ENCODE measurements at regions of chrX and their contacts with region 1.

Region 1: GRCh38 chrX:49230469-49231232 is 2.5 kb downstream of the CACNA1F start:
- DNase-seq: peak; percentile 54
- ATAC-seq: peak; percentile 78
- H3K4me3 Mint-ChIP-seq: peak overlapping the region; percentile 85
- H3K27ac Mint-ChIP-seq: peak overlapping the region; percentile 95
- H3K4me1 Mint-ChIP-seq: peaks cover 18% of the 10 kb centered on the region
- H3K27me3 Mint-ChIP-seq: no peaks in the 10 kb centered on the region
- CTCF ChIP-seq: no peak

Region 2: DNA sequence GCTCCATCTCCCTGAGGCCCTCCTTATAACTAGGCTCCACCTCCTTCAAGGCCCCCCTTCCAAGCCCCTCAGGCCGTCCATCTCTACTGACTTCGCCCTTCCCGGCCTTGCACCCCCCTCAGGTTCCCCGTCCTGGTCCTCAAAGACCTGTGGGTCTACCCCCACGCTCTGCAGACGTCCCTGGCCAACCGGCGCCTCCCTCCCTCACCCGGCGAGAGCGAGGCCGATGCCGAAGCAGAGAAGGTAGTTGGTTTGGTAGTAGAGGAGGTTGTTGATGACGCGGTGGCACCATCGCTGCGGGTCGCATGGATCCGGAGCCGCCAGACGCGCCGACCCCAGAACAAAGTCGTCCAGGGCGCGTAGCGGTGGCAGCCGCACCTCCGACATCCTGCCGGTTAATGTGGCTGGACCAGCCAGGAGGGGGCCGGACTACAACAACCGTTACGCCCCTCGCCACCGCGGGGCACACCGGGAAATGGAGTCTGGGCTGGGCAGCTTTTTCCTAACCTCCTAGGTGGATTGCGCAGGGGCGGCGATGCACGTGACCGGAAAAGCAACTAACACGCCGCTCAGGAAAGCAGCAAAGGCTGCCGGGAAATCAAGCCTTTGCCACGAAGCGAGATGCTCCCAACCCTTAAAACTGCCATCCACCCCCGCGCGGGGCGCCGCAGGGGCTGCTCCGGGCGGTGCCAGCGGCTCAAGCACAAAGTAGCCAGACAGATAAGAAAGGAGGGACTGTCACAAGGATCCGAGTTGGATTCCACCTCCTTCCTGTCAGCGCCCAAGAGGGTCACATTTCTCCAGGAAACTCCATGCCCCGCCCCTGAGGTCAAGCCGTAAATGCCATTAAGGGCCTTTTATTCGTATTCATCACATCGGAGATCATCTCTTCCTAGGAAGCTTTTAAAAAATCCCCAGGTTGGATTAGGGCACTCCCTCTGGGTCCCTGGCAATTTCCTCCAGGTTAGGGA is 156.8 kb before region 1 on chrX and contains the start of gene PRAF2:
- CTCF ChIA-PET with region 1: no interaction called
- POLR2A ChIA-PET with region 1: no interaction called
- intact Hi-C with region 1: loop called (anchors 1 kb)
- DNase-seq: peak; percentile 76
- ATAC-seq: peak; percentile 99
- H3K4me3 Mint-ChIP-seq: peak within 1 kb of the TSS; percentile 84
- H3K27ac Mint-ChIP-seq: peak within 1 kb of the TSS; percentile 72
- H3K4me1 Mint-ChIP-seq: peaks cover 23% of the 10 kb centered on the region
- H3K27me3 Mint-ChIP-seq: no peaks in the 10 kb centered on the region
- CTCF ChIP-seq: no peak
- total RNA-seq, gene PRAF2: 10.6 and 11.6 TPM in 2 replicates

Region 3: GRCh38 chrX:49199906-49200771 is 30.5 kb before region 1 on chrX and contains the start of gene SYP:
- CTCF ChIA-PET with region 1: no interaction called
- POLR2A ChIA-PET with region 1: interaction called, 3 read pairs
- intact Hi-C with region 1: loop called (anchors 1 kb)
- DNase-seq: peak; percentile 83
- ATAC-seq: peak; percentile 99
- H3K4me3 Mint-ChIP-seq: peak within 1 kb of the TSS; percentile 75
- H3K27ac Mint-ChIP-seq: peak within 1 kb of the TSS; percentile 53
- H3K4me1 Mint-ChIP-seq: peaks cover 9% of the 10 kb centered on the region
- H3K27me3 Mint-ChIP-seq: no peaks in the 10 kb centered on the region
- CTCF ChIP-seq: no peak
- total RNA-seq, gene SYP: 0.82 and 1.6 TPM in 2 replicates

Region 4: GRCh38 chrX:49242545-49243066 is 12.0 kb after region 1 on chrX:
- CTCF ChIA-PET with region 1: no interaction called
- POLR2A ChIA-PET with region 1: no interaction called
- intact Hi-C with region 1: no loop called
- DNase-seq: no peak
- ATAC-seq: no peak
- H3K4me3 Mint-ChIP-seq: no peak overlapping the region
- H3K27ac Mint-ChIP-seq: no peak overlapping the region
- H3K4me1 Mint-ChIP-seq: no peaks in the 10 kb centered on the region
- H3K27me3 Mint-ChIP-seq: no peaks in the 10 kb centered on the region
- CTCF ChIP-seq: no peak